ENCODE measurements at regions of chr1 and their contacts with region 1.

Region 1: GRCh38 chr1:182614796-182615454 is 10.7 kb upstream of the RGS16 start:
- DNase-seq: peak in 7 of 9 donors; percentile 26 to 68 (median 35)
- ATAC-seq: peak; percentile 14
- H3K4me3 ChIP-seq: peak overlapping the region; percentile 54
- H3K4me3 Mint-ChIP-seq: peak overlapping the region; percentile 74 to 87 (median 84)
- H3K27ac ChIP-seq: peak overlapping the region; percentile 15
- H3K27ac Mint-ChIP-seq: peak overlapping the region in 8 of 9 donors; percentile 74 to 95 (median 92)
- H3K4me1 ChIP-seq: peaks cover 15 to 32% of the 10 kb centered on the region in 2 donors
- H3K4me1 Mint-ChIP-seq: peaks cover 28 to 68% (median 32%) of the 10 kb centered on the region in 7 donors
- H3K27me3 ChIP-seq: no peaks in the 10 kb centered on the region
- H3K27me3 Mint-ChIP-seq: peaks cover 0 to 75% (median 30%) of the 10 kb centered on the region in 5 donors

Region 2: DNA sequence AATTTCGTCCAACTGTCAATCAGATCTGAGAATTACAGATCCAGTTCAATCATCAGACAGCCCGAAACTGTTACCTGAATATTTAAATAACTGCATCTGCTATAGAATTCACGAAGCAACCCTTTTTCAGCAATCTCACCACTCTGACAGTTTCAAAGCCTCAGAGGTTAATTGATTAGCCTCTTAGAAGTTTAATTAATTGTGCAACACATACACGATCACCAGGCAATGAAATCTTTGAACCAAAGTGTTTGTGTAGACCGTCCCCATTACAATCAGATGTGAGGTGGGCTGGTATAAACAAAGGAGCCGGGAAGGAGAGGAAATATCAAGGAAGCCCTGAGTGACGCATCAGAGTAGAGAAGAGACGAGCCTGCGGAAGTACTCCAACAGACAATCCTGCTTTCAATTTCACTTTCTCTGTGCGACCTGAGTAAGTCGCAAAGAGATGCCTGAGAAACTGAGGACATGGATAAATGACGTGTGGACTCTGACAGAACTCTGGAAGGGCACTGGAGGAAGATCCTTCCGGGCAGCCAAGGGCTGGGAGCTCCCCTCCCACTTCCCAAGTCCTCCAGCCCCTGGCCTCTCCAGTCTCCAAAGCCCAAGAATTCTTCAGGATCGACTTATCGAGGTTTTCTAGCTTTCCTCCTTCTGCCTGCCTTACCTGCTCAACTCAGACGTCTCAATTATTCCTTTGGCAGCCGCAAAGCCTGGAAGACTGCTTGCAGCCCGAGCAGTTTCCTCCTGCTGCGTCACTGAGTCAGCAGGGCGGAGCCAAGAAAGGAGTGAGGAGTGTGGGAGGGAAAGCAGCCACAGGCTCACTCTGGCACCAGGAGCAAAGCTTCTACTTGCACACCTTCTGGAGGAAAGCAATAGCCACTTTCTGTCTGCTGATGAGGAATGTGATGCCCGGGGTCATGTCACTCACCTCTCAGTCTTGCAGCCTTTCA is 26.1 kb before region 1 on chr1 and contains the start of gene RNASEL:
- CTCF ChIA-PET with region 1: no interaction called
- POLR2A ChIA-PET with region 1: interaction called, 6 read pairs
- intact Hi-C with region 1: loop called (anchors 1 kb)
- DNase-seq: peak; percentile 24 to 72 (median 65)
- ATAC-seq: peak; percentile 89
- H3K4me3 ChIP-seq: peak within 1 kb of the TSS; percentile 92
- H3K4me3 Mint-ChIP-seq: peak within 1 kb of the TSS; percentile 93 to 99 (median 98)
- H3K27ac ChIP-seq: peak within 1 kb of the TSS; percentile 97
- H3K27ac Mint-ChIP-seq: peak within 1 kb of the TSS; percentile 97 to 100 (median 99)
- H3K4me1 ChIP-seq: peaks cover 23 to 27% of the 10 kb centered on the region in 2 donors
- H3K4me1 Mint-ChIP-seq: peaks cover 31 to 60% (median 51%) of the 10 kb centered on the region in 7 donors
- H3K27me3 ChIP-seq: no peaks in the 10 kb centered on the region
- H3K27me3 Mint-ChIP-seq: peaks cover 0 to 9% (median 0%) of the 10 kb centered on the region in 5 donors
- total RNA-seq, gene RNASEL: 5.7 to 34.9 (median 12.1) TPM

Region 3: GRCh38 chr1:182629499-182630096 is 14.7 kb after region 1 on chr1:
- CTCF ChIA-PET with region 1: interaction called, 7 read pairs
- POLR2A ChIA-PET with region 1: interaction called, 9 read pairs
- intact Hi-C with region 1: loop called (anchors 1 kb)
- DNase-seq: peak in 6 of 9 donors; percentile 10 to 73 (median 20)
- ATAC-seq: peak; percentile 86
- H3K4me3 ChIP-seq: no peak overlapping the region
- H3K4me3 Mint-ChIP-seq: peak overlapping the region in 9 of 10 donors; percentile 2 to 69 (median 30)
- H3K27ac ChIP-seq: no peak overlapping the region
- H3K27ac Mint-ChIP-seq: peak overlapping the region in 4 of 9 donors; percentile 1 to 39 (median 12)
- H3K4me1 ChIP-seq: peaks cover 13 to 27% of the 10 kb centered on the region in 2 donors
- H3K4me1 Mint-ChIP-seq: peaks cover 39 to 64% (median 49%) of the 10 kb centered on the region in 7 donors
- H3K27me3 ChIP-seq: no peaks in the 10 kb centered on the region
- H3K27me3 Mint-ChIP-seq: peaks cover 0 to 42% (median 0%) of the 10 kb centered on the region in 5 donors

Region 4: DNA sequence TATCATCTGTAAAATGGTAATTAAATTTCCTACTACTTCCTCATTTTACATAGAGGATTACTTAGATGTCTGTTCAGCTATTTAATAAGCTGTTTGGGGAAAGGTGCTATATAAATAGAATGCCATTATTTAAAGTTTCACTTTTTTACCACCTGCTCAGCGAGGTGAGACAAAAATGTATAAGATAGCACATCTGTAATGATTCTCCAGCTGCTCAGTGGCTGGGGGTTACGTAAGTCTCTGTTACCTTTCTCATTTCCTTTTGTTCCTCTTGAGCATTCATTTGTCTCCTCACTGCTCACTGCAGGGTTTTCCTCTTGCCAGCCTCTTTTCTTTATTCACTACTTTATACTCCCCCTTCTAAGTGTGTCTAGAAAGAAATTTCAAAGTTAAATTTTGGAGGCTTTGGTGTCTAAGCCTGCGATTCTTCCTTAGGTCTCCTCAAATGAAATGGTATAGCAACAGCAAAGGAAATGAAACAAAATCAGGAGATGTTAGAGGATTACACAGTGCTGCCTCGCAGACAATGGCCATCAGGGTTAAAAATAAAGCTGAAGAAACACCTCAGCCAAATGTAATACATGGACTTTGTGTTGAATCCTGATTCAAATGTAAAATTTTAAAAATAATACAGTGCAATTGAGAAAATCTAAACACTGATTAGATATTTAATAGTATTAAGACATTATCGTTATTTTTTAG is 62.6 kb after region 1 on chr1:
- CTCF ChIA-PET with region 1: interaction called, 3 read pairs
- POLR2A ChIA-PET with region 1: no interaction called
- intact Hi-C with region 1: loop called in 1 of 2 experiments (anchors 5 kb)
- DNase-seq: no peak
- ATAC-seq: no peak
- H3K4me3 ChIP-seq: no peak overlapping the region
- H3K4me3 Mint-ChIP-seq: no peak overlapping the region
- H3K27ac ChIP-seq: no peak overlapping the region
- H3K27ac Mint-ChIP-seq: no peak overlapping the region
- H3K4me1 ChIP-seq: no peaks in the 10 kb centered on the region
- H3K4me1 Mint-ChIP-seq: peaks cover 0 to 11% (median 0%) of the 10 kb centered on the region in 7 donors
- H3K27me3 ChIP-seq: no peaks in the 10 kb centered on the region
- H3K27me3 Mint-ChIP-seq: peaks cover 0 to 24% (median 3%) of the 10 kb centered on the region in 5 donors

Region 5: GRCh38 chr1:182716740-182717720 is 102.1 kb after region 1 on chr1:
- CTCF ChIA-PET with region 1: no interaction called
- POLR2A ChIA-PET with region 1: no interaction called
- intact Hi-C with region 1: loop called in 1 of 2 experiments (anchors 5 kb)
- DNase-seq: no peak
- ATAC-seq: no peak
- H3K4me3 ChIP-seq: no peak overlapping the region
- H3K4me3 Mint-ChIP-seq: peak overlapping the region in 1 of 10 donors; percentile 18
- H3K27ac ChIP-seq: no peak overlapping the region
- H3K27ac Mint-ChIP-seq: no peak overlapping the region
- H3K4me1 ChIP-seq: peaks cover 4 to 6% of the 10 kb centered on the region in 2 donors
- H3K4me1 Mint-ChIP-seq: peaks cover 9 to 34% (median 27%) of the 10 kb centered on the region in 7 donors
- H3K27me3 ChIP-seq: no peaks in the 10 kb centered on the region
- H3K27me3 Mint-ChIP-seq: no peaks in the 10 kb centered on the region

Region 6: DNA sequence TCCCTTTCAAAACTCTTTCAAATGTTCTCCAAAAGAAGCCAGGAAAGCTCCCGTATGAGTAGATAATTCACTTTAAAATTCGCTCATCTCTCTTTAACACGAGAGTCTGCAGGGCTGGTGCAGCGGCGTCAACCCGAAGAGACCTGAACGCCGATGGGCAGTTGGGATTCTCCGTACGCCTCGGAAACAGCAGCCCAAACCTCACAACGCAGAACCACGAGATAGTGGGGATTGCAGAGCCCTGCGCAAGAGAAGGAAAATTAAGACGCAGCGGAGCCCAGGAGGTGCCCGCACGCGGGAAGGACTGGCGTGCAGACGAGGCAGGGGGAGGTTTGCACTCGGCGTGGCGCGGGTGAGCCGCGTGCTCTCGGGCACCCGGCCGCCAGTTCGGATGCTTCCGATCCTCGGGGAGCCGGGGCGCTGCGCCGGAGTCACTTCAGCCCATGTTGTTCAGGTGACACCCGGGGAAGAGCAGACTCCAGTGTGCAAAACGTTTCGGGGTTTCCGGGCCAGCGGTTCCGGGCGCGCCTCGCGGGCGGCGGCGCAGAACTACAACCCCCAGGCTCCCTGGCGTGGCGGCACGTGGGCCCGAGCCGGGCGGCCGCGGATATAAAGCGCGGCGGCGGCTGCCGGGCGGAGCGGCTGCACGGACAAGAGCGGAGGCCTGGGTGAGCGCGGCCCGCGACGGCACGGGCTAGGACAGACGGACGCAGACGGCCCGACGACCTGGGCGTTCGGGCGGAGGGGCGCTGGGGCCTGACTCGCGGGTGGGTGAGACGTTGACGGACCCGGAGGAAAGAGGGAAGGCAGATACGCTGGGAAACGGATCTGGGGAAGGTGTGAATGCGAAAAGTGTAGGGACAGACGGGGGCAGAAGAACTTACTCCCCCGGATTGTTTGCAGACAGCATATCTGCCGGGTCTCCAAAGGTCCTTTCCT is 174.5 kb after region 1 on chr1 and contains the start of gene NPL:
- CTCF ChIA-PET with region 1: interaction called, 3 read pairs
- POLR2A ChIA-PET with region 1: interaction called, 6 read pairs
- intact Hi-C with region 1: loop called in 1 of 2 experiments (anchors 1 kb)
- DNase-seq: peak; percentile 78 to 88 (median 86)
- ATAC-seq: peak; percentile 97
- H3K4me3 ChIP-seq: peak within 1 kb of the TSS; percentile 94
- H3K4me3 Mint-ChIP-seq: peak within 1 kb of the TSS; percentile 88 to 96 (median 94)
- H3K27ac ChIP-seq: peak within 1 kb of the TSS; percentile 68
- H3K27ac Mint-ChIP-seq: peak within 1 kb of the TSS; percentile 45 to 94 (median 87)
- H3K4me1 ChIP-seq: peaks cover 8 to 13% of the 10 kb centered on the region in 2 donors
- H3K4me1 Mint-ChIP-seq: peaks cover 8 to 18% (median 15%) of the 10 kb centered on the region in 7 donors
- H3K27me3 ChIP-seq: no peaks in the 10 kb centered on the region
- H3K27me3 Mint-ChIP-seq: peaks cover 0 to 38% (median 0%) of the 10 kb centered on the region in 5 donors
- total RNA-seq, gene NPL: 3.0 to 20.8 (median 9.9) TPM

Region 7: GRCh38 chr1:183580281-183580682 is 965.4 kb after region 1 on chr1:
- CTCF ChIA-PET with region 1: no interaction called
- POLR2A ChIA-PET with region 1: no interaction called
- intact Hi-C with region 1: no loop called
- DNase-seq: peak in 5 of 9 donors; percentile 7 to 30 (median 21)
- ATAC-seq: peak; percentile 75
- H3K4me3 ChIP-seq: no peak overlapping the region
- H3K4me3 Mint-ChIP-seq: peak overlapping the region; percentile 14 to 80 (median 70)
- H3K27ac ChIP-seq: no peak overlapping the region
- H3K27ac Mint-ChIP-seq: peak overlapping the region in 5 of 9 donors; percentile 18 to 84 (median 73)
- H3K4me1 ChIP-seq: no peaks in the 10 kb centered on the region
- H3K4me1 Mint-ChIP-seq: peaks cover 9 to 34% (median 10%) of the 10 kb centered on the region in 7 donors
- H3K27me3 ChIP-seq: no peaks in the 10 kb centered on the region
- H3K27me3 Mint-ChIP-seq: no peaks in the 10 kb centered on the region

Measured in naive thymus-derived CD4-positive, alpha-beta T cell (primary cell).